PC-9 (cell line): ENCODE measurements at regions of chr1 and their contacts with region 1.

Region 1: GRCh38 chr1:212665241-212666115 is 34.2 kb downstream of the BATF3 start:
- DNase-seq: peak; percentile 51 to 84
- H3K4me3 ChIP-seq: peak overlapping the region; percentile 53; the same call in 1 of the 2 replicates
- H3K27ac ChIP-seq: no peak overlapping the region
- H3K4me1 ChIP-seq: peaks cover 22% of the 10 kb centered on the region
- H3K27me3 ChIP-seq: no peaks in the 10 kb centered on the region
- CTCF ChIP-seq: peak; percentile 90

Region 2: DNA sequence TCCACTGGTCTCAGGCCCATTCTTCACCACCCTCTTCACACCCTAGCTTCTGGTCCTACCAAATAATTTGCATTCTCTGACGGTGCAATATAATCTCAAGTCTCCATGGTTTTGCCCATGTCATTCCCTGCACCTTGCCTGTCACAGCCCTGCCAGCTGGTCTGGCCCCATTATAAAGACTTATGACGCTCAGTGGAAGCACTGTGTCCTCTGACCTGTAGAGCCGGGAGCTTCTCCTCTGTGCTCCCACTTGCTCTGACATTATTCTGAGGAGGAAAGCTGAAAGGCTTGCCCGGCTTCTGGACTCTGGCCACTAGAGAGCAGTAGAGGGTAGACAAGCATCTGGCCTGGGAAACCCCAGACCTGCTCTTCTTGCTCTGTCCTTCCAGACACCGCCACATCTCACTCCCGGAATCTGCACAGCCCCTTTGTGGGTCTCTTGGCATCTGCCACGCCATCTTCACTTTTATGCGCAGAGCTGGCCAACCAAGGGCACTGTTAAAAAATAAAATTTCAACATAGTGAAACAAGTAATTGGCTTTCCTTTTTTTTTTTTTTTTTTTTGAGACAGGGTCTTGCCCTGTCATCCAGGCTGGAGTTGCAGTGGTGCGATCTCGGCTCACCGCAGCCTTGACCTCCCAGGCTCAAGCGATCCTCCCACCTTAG is 188.3 kb before region 1 on chr1:
- CTCF ChIA-PET with region 1: interaction called, 10 read pairs
- POLR2A ChIA-PET with region 1: no interaction called
- intact Hi-C with region 1: loop called (anchors 1 kb)
- DNase-seq: peak; percentile 74 to 81
- H3K4me3 ChIP-seq: no peak overlapping the region
- H3K27ac ChIP-seq: no peak overlapping the region
- H3K4me1 ChIP-seq: peaks cover 12% of the 10 kb centered on the region
- H3K27me3 ChIP-seq: no peaks in the 10 kb centered on the region
- CTCF ChIP-seq: peak; percentile 92

Region 3: GRCh38 chr1:212485895-212486590 is 179.4 kb before region 1 on chr1:
- CTCF ChIA-PET with region 1: no interaction called
- POLR2A ChIA-PET with region 1: no interaction called
- intact Hi-C with region 1: loop called (anchors 1 kb)
- DNase-seq: peak; percentile 95 to 100
- H3K4me3 ChIP-seq: no peak overlapping the region
- H3K27ac ChIP-seq: peak overlapping the region; percentile 81
- H3K4me1 ChIP-seq: peaks cover 74% of the 10 kb centered on the region
- H3K27me3 ChIP-seq: no peaks in the 10 kb centered on the region
- CTCF ChIP-seq: no peak

Region 4: GRCh38 chr1:212630158-212630900 is 35.1 kb before region 1 on chr1:
- CTCF ChIA-PET with region 1: no interaction called
- POLR2A ChIA-PET with region 1: no interaction called
- intact Hi-C with region 1: no loop called
- DNase-seq: peak; percentile 33 to 44
- H3K4me3 ChIP-seq: no peak overlapping the region
- H3K27ac ChIP-seq: no peak overlapping the region
- H3K4me1 ChIP-seq: no peaks in the 10 kb centered on the region
- H3K27me3 ChIP-seq: peaks cover 18% of the 10 kb centered on the region; the same call in 1 of the 2 replicates
- CTCF ChIP-seq: peak; percentile 89

Region 5: GRCh38 chr1:212699104-212699624 is 33.7 kb after region 1 on chr1:
- CTCF ChIA-PET with region 1: no interaction called
- POLR2A ChIA-PET with region 1: no interaction called
- intact Hi-C with region 1: loop called (anchors 2 kb)
- DNase-seq: peak in 1 of 2 experiments; percentile 43
- H3K4me3 ChIP-seq: peak overlapping the region; percentile 58
- H3K27ac ChIP-seq: no peak overlapping the region
- H3K4me1 ChIP-seq: 0 out of 2 replicates have a peak, but pooled peaks cover 6% of the 10 kb centered on the region
- H3K27me3 ChIP-seq: peaks cover 46% of the 10 kb centered on the region
- CTCF ChIP-seq: peak; percentile 59; the same call in 1 of the 2 replicates

Region 6: GRCh38 chr1:212782422-212783154 is 117.1 kb after region 1 on chr1:
- CTCF ChIA-PET with region 1: interaction called, 3 read pairs
- POLR2A ChIA-PET with region 1: no interaction called
- intact Hi-C with region 1: loop called (anchors 1 kb)
- DNase-seq: peak in 1 of 2 experiments; percentile 38
- H3K4me3 ChIP-seq: no peak overlapping the region
- H3K27ac ChIP-seq: no peak overlapping the region
- H3K4me1 ChIP-seq: no peaks in the 10 kb centered on the region
- H3K27me3 ChIP-seq: no peaks in the 10 kb centered on the region
- CTCF ChIP-seq: peak; percentile 81

Region 7: GRCh38 chr1:212994926-212995325 is 329.4 kb after region 1 on chr1:
- CTCF ChIA-PET with region 1: interaction called, 5 read pairs
- POLR2A ChIA-PET with region 1: no interaction called
- intact Hi-C with region 1: loop called (anchors 1 kb)
- DNase-seq: no peak
- H3K4me3 ChIP-seq: no peak overlapping the region
- H3K27ac ChIP-seq: no peak overlapping the region
- H3K4me1 ChIP-seq: no peaks in the 10 kb centered on the region
- H3K27me3 ChIP-seq: no peaks in the 10 kb centered on the region
- CTCF ChIP-seq: no peak